Posterior vena cava (tissue), 2 donors: ENCODE measurements at regions of chr2 and their contacts with region 1.

Region 1: DNA sequence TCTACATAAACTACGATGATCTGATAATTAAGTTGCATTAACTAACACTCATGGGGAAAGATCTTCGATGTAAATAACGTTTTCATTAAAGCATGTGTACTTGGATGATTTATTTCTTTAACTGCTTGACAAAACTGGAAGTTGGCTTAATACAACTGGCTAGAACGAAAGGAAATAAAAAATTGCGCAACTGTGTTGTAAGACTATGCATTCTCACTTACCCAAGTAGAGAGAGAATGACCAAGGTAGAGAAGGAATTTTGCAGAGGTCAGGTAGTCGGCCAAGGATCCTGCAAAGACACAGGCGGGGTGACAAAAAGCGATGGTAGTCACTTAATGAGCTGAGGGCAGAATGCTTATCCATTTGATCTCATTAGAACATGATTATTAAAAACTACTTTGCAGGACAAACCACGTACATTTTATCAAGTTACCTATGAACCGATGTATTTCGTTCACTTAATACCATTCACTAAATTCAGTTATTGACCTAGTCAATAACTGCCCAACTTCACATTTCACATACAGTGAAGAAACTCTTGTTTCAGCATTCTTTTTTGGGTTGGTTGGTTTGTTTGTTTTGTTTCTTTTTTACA is 897 bp downstream of the SLC40A1 start:
- DNase-seq: no peak

Region 2: GRCh38 chr2:189515264-189515663 is 64.4 kb before region 1 on chr2:
- intact Hi-C with region 1: loop called (anchors 10 kb)
- DNase-seq: no peak

Region 3: DNA sequence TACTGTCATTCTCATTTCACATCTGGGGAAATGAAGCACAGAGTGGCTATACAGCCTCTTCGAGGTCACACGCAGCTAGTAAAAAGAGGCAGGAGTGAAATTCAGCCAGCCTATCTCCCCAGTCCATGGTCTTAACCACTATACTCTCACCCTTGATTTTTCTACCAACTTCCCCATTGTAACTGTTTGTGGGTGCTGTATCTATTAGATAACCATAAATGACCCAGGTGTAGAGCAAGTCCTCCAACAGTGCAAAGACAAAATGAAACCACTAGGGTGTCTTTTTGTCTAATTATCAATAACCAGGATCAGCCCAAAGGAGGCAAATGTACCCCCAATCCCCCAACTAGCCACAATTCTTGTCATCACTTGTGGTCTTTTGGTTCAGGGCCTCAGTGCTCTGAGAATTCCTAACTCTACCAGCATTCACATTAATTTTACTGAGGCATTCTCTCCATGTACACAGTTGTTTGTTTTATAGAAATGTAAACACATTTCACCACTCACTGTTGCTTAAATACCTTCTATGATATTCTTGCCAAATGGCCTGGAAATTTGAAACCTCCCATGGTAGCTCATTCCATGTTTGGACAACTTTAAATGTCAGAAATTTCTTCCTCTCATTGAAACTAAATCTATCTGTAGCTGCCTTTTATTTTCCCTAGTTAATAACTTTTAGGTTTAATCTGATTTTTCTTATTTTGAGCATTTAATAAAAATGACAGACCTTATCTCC is 57.8 kb before region 1 on chr2:
- intact Hi-C with region 1: loop called (anchors 10 kb)
- DNase-seq: no peak

Region 4: DNA sequence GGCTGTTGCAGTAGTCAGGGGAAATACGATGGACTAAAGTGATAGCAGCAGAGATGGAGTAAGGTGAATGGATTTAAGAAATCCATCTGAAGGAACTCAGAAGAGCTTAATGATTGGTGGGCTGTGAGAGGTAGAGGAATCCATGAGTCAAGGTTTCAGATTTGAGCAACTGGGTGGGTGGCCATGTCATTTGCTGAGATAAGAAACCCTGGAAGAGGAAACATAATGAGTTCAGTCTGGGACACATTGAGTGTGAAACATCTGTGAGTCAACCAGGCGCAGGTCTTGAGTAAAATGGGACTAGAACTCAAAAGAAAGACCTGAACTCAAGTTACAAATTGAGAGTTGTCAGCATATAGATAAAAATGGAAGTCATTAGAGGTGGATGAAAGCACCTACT is 61.9 kb after region 1 on chr2:
- intact Hi-C with region 1: no loop called
- DNase-seq: no peak